B cell (primary cell): ENCODE measurements at regions of chr4 and their contacts with region 1.

Region 1: GRCh38 chr4:75916091-75916661 is 13.9 kb upstream of the PPEF2 start:
- DNase-seq: peak; percentile 48
- ATAC-seq: peak; percentile 79
- H3K4me3 ChIP-seq: no peak overlapping the region
- H3K4me3 Mint-ChIP-seq: no peak overlapping the region
- H3K27ac ChIP-seq: no peak overlapping the region
- H3K27ac Mint-ChIP-seq: no peak overlapping the region
- H3K4me1 ChIP-seq: no peaks in the 10 kb centered on the region
- H3K4me1 Mint-ChIP-seq: no peaks in the 10 kb centered on the region
- H3K27me3 ChIP-seq: no peaks in the 10 kb centered on the region
- H3K27me3 Mint-ChIP-seq: no peaks in the 10 kb centered on the region
- CTCF ChIP-seq: peak; percentile 79

Region 2: DNA sequence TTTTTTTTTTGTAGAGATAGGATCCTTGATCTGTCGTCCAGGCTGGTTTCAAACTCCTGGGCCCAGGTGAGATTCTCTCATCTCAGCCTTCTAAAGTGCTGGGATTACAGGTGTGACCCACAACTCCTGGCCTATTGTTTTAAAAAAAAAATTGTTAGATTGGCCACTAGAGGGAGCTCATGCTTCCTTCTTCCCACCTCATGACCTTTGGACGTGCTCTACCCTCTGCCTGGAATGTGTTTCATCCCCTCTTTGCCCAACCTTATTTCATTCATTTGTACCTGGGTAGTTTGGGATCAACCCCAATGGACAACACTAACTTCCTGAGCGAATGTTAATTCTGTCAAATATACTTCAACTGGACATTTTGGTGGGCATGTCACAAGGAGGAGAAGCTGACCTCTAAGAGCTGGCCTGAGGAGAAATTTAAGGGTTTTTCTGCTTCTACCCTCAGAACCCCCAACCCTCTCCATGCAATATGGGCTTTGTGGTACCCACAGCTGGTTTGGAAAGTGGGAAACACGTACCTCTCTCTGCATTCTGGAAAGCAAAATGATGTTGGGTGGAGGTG is 20.3 kb before region 1 on chr4:
- CTCF ChIA-PET with region 1: interaction called, 21 read pairs
- POLR2A ChIA-PET with region 1: no interaction called
- intact Hi-C with region 1: no loop called
- DNase-seq: peak; percentile 73
- ATAC-seq: peak; percentile 68
- H3K4me3 ChIP-seq: no peak overlapping the region
- H3K4me3 Mint-ChIP-seq: no peak overlapping the region
- H3K27ac ChIP-seq: no peak overlapping the region
- H3K27ac Mint-ChIP-seq: no peak overlapping the region
- H3K4me1 ChIP-seq: no peaks in the 10 kb centered on the region
- H3K4me1 Mint-ChIP-seq: no peaks in the 10 kb centered on the region
- H3K27me3 ChIP-seq: no peaks in the 10 kb centered on the region
- H3K27me3 Mint-ChIP-seq: no peaks in the 10 kb centered on the region
- CTCF ChIP-seq: peak; percentile 80

Region 3: DNA sequence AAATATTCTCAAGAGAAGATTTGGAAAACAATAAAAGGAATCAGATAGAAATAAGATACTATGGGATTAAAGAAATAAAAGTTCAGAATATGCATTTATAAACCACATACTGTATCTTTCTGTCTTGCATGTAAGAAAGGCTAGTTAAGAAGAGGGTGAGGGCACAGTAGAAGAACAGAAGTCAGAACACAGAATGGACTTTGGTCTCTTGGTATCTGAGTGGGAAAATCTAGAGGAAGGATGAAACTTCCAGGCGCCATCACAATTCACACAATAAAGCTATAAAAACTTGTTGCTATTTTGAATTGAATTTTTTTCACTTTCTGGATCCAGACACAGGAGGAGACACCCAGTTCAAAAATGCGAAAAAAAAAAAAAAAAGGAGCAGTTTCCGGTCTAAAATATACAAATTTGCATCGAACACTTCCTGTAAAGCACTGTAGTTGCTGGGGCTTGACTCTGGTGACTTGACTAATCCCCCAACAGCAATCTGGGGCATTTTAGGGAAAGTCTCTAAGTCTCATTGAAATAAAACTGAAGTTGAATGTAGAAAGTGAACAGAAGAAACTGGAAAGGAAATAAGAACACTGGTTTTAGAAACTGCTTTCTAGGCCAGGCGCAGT is 32.8 kb after region 1 on chr4:
- CTCF ChIA-PET with region 1: interaction called, 13 read pairs
- POLR2A ChIA-PET with region 1: no interaction called
- intact Hi-C with region 1: no loop called
- DNase-seq: peak; percentile 49
- ATAC-seq: peak; percentile 39
- H3K4me3 ChIP-seq: no peak overlapping the region
- H3K4me3 Mint-ChIP-seq: peak overlapping the region; percentile 35
- H3K27ac ChIP-seq: peak overlapping the region in 1 of 2 donors; percentile 9
- H3K27ac Mint-ChIP-seq: peak overlapping the region; percentile 74
- H3K4me1 ChIP-seq: peaks cover 10 to 11% of the 10 kb centered on the region in 2 donors
- H3K4me1 Mint-ChIP-seq: peaks cover 23% of the 10 kb centered on the region
- H3K27me3 ChIP-seq: no peaks in the 10 kb centered on the region
- H3K27me3 Mint-ChIP-seq: no peaks in the 10 kb centered on the region
- CTCF ChIP-seq: no peak

Region 4: DNA sequence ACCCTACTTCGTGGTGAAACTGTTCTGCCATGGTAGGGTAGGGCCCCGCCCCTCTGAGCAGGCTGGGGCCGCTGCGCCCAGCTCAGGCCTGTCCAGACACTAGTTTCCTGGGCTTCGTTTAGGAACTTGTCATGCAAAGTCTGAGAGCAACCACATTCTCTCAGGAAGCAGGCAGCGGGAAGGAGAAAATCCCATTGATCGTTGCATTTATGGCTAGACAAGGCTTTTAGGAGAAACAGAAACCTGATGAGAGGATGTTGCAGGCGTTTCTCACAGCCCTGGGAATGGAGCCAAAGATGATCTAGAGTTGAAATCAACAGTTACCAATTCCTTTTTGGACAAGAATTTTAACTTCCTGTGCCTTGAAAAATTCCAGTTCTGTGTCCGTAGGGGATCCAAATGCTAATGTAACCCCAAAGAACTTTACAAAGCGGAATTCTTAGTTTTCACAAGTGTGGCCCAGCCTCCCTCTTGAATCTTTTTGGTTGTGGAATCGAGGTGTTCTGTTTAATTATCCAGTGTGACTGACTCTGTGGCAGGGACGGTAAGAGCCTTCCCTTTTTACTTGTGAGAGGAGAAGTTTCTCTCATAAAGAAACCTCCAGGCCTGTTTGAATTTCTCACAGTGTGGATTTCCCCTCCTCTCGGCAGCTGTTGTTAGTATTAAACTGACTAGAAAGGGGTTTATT is 95.7 kb after region 1 on chr4:
- CTCF ChIA-PET with region 1: no interaction called
- POLR2A ChIA-PET with region 1: no interaction called
- intact Hi-C with region 1: no loop called
- DNase-seq: no peak
- ATAC-seq: no peak
- H3K4me3 ChIP-seq: peak overlapping the region in 3 of 5 experiments; percentile 8 to 33 (median 16)
- H3K4me3 Mint-ChIP-seq: no peak overlapping the region
- H3K27ac ChIP-seq: peak overlapping the region in 1 of 2 donors; percentile 42
- H3K27ac Mint-ChIP-seq: no peak overlapping the region
- H3K4me1 ChIP-seq: peaks cover 20 to 23% of the 10 kb centered on the region in 2 donors
- H3K4me1 Mint-ChIP-seq: peaks cover 28% of the 10 kb centered on the region
- H3K27me3 ChIP-seq: no peaks in the 10 kb centered on the region
- H3K27me3 Mint-ChIP-seq: no peaks in the 10 kb centered on the region
- CTCF ChIP-seq: no peak

Region 5: GRCh38 chr4:76028350-76028765 is 112.2 kb after region 1 on chr4:
- CTCF ChIA-PET with region 1: no interaction called
- POLR2A ChIA-PET with region 1: no interaction called
- intact Hi-C with region 1: no loop called
- DNase-seq: peak; percentile 40
- ATAC-seq: no peak
- H3K4me3 ChIP-seq: peak overlapping the region in 3 of 5 experiments; percentile 5 to 16 (median 6)
- H3K4me3 Mint-ChIP-seq: peak overlapping the region; percentile 30
- H3K27ac ChIP-seq: no peak overlapping the region
- H3K27ac Mint-ChIP-seq: no peak overlapping the region
- H3K4me1 ChIP-seq: peaks cover 17 to 20% of the 10 kb centered on the region in 2 donors
- H3K4me1 Mint-ChIP-seq: peaks cover 24% of the 10 kb centered on the region
- H3K27me3 ChIP-seq: no peaks in the 10 kb centered on the region
- H3K27me3 Mint-ChIP-seq: no peaks in the 10 kb centered on the region
- CTCF ChIP-seq: no peak

Region 6: GRCh38 chr4:76061982-76062381 is 145.8 kb after region 1 on chr4:
- CTCF ChIA-PET with region 1: interaction called, 13 read pairs
- POLR2A ChIA-PET with region 1: no interaction called
- intact Hi-C with region 1: loop called (anchors 1 kb)
- DNase-seq: peak; percentile 71
- ATAC-seq: peak; percentile 96
- H3K4me3 ChIP-seq: peak overlapping the region in 1 of 5 experiments; percentile 31
- H3K4me3 Mint-ChIP-seq: peak overlapping the region; percentile 35
- H3K27ac ChIP-seq: peak overlapping the region; percentile 31 to 32
- H3K27ac Mint-ChIP-seq: peak overlapping the region; percentile 37
- H3K4me1 ChIP-seq: peaks cover 22 to 31% of the 10 kb centered on the region in 2 donors
- H3K4me1 Mint-ChIP-seq: peaks cover 29% of the 10 kb centered on the region
- H3K27me3 ChIP-seq: no peaks in the 10 kb centered on the region
- H3K27me3 Mint-ChIP-seq: no peaks in the 10 kb centered on the region
- CTCF ChIP-seq: no peak